ENCODE measurements at regions of chr11 and their contacts with region 1.

Region 1: GRCh38 chr11:45872513-45873356 is 12.7 kb upstream of the MAPK8IP1 start:
- DNase-seq: peak; percentile 60
- H3K4me3 Mint-ChIP-seq: no peak overlapping the region
- H3K27ac Mint-ChIP-seq: no peak overlapping the region
- H3K4me1 Mint-ChIP-seq: no peaks in the 10 kb centered on the region
- H3K27me3 Mint-ChIP-seq: no peaks in the 10 kb centered on the region
- CTCF ChIP-seq: peak; percentile 59

Region 2: DNA sequence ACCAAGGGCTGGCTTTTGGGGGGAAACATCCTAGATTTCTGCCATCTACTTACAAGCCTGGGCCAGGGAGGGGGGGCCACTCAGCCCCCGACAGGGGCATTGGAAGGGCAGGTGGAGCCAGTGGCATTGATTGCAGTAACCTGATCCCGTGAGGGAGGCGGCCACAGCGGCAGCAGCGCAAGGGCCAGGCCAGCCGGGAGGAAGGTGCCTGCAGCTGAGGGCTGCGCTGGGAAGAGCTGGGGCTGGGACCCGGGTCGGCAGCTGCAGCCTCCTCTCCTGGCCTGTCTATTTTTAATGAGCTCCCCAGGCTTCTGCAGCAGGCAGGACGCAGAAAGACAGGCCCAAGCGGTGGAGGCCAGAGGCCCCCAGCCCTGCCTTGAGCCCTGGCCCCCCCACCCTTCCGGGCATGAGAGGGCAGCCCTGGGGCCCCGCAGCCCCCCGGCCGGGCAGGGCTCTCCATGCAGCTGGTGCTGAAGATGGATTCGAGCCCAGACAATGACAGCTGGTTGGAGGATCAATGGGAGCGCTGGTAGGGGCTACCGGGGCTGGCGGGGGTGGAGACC is 23.8 kb after region 1 on chr11:
- CTCF ChIA-PET with region 1: interaction called, 5 read pairs
- intact Hi-C with region 1: loop called (anchors 1 kb)
- DNase-seq: peak; percentile 68
- H3K4me3 Mint-ChIP-seq: no peak overlapping the region
- H3K27ac Mint-ChIP-seq: no peak overlapping the region
- H3K4me1 Mint-ChIP-seq: peaks cover 10% of the 10 kb centered on the region
- H3K27me3 Mint-ChIP-seq: peaks cover 63% of the 10 kb centered on the region
- CTCF ChIP-seq: no peak

Measured in Calu3 (cell line).